ENCODE measurements at regions of chr9 and their contacts with region 1.

Region 1: GRCh38 chr9:19230356-19231125 is at the start of gene DENND4C:
- DNase-seq: peak; percentile 68 to 90
- H3K4me3 ChIP-seq: peak within 1 kb of the TSS; percentile 88 to 95 (median 90)
- H3K27ac ChIP-seq: peak within 1 kb of the TSS; percentile 94
- H3K4me1 ChIP-seq: peaks cover 0 to 8% (median 1%) of the 10 kb centered on the region in 4 experiments; a peak in 4 of 7 replicates
- H3K27me3 ChIP-seq: no peaks in the 10 kb centered on the region
- CTCF ChIP-seq: peak in 2 of 3 experiments; percentile 13 to 22; a peak in 2 of 4 replicates
- EP300 ChIP-seq: no peak
- POLR2A ChIP-seq: peak in 1 of 2 experiments; percentile 93; a peak in 2 of 3 replicates
- RAD21 ChIP-seq: no peak
- total RNA-seq, gene DENND4C: 18.9 and 19.8 TPM in 2 replicates

Region 2: GRCh38 chr9:18824095-18824666 is 406.4 kb before region 1 on chr9:
- CTCF ChIA-PET with region 1: no interaction called
- POLR2A ChIA-PET with region 1: no interaction called
- DNase-seq: no peak
- H3K4me3 ChIP-seq: no peak overlapping the region
- H3K27ac ChIP-seq: no peak overlapping the region
- H3K4me1 ChIP-seq: peaks cover 0 to 6% (median 2%) of the 10 kb centered on the region in 4 experiments; a peak in 3 of 7 replicates
- H3K27me3 ChIP-seq: no peaks in the 10 kb centered on the region
- CTCF ChIP-seq: peak; percentile 49 to 63 (median 54)
- EP300 ChIP-seq: no peak
- POLR2A ChIP-seq: no peak
- RAD21 ChIP-seq: peak; percentile 82 to 84

Region 3: DNA sequence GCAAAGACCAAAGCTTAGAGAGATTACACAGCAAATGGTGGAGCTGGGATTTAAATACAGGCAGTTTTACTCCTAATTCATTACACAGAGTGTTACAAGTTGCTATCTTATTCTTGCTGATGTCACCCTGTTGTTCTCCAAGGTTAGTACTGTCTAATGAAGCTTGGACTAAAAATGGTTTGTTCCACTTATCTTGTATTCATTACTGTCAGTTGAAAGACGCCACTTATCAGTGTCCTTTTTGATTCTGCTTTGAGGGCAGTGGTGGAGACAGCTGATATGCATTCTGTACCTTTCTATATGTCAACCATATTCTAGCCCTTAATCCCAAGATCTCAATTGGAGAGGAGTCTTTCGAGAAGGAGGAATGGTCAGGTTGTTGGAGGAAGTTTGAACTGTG is 14.1 kb before region 1 on chr9:
- CTCF ChIA-PET with region 1: interaction called, 3 read pairs
- POLR2A ChIA-PET with region 1: interaction called, 21 read pairs
- DNase-seq: no peak
- H3K4me3 ChIP-seq: no peak overlapping the region
- H3K27ac ChIP-seq: no peak overlapping the region
- H3K4me1 ChIP-seq: peaks cover 0 to 4% (median 2%) of the 10 kb centered on the region in 4 experiments; a peak in 1 of 7 replicates
- H3K27me3 ChIP-seq: no peaks in the 10 kb centered on the region
- CTCF ChIP-seq: no peak
- EP300 ChIP-seq: no peak
- POLR2A ChIP-seq: no peak
- RAD21 ChIP-seq: no peak